Activated naive CD4-positive, alpha-beta T cell treated with anti-CD3 and anti-CD28 coated beads for 36 hours (primary cell): ENCODE measurements at regions of chr19 and their contacts with region 1.

Region 1: DNA sequence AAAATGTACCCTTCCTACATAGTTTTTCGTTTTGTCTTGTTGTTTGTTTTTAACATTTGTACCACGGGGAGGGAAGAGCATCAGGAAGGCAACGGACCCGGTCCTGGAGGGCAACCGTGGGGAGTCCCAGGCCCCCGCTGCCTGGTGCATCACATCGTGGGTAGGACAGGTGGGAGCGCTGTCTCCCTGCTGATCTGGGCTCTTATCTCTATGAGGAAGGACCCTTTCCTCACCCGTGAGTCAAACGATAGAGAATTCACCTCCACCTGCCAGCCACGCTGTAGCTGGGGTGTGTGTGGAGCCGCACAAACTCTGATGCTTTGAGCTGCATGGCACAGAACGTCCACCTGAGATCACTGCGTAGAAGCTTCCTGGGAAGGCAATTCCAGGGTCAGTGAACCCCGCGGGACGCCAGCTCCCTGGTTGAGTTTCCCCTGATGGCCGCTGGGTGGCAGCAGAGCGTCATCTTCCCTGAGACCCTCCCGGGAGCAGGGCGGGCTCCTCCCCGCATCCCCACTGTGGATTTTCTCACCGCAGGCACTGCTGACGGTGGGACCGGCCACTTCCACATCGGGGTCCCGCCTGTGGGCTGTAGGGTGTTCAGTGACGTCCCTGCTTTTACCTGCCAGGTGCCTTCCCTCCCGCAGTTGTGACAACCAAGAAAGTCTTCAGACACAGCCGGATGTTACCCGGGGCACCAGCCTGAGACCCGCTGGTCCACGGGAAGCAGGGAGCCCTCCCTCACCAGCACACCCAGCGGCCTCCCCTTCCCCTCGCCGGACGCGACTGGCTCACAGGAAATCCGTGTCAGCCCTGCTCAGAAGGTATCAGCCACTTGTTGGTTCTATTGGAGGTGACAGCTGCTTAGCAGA is 54.7 kb downstream of the ZNF787 start:
- DNase-seq: peak; percentile 68
- H3K4me3 Mint-ChIP-seq: peak overlapping the region; percentile 32
- H3K27ac Mint-ChIP-seq: no peak overlapping the region
- H3K4me1 Mint-ChIP-seq: peaks cover 12% of the 10 kb centered on the region
- H3K27me3 Mint-ChIP-seq: peaks cover 34% of the 10 kb centered on the region

Region 2: GRCh38 chr19:56080669-56081401 is 14.4 kb after region 1 on chr19:
- CTCF ChIA-PET with region 1: interaction called, 23 read pairs
- intact Hi-C with region 1: no loop called
- DNase-seq: peak; percentile 84
- H3K4me3 Mint-ChIP-seq: peak overlapping the region; percentile 41
- H3K27ac Mint-ChIP-seq: no peak overlapping the region
- H3K4me1 Mint-ChIP-seq: peaks cover 10% of the 10 kb centered on the region
- H3K27me3 Mint-ChIP-seq: peaks cover 17% of the 10 kb centered on the region

Region 3: GRCh38 chr19:56121180-56122167 is 55.1 kb after region 1 on chr19 and contains the start of gene ZNF787:
- CTCF ChIA-PET with region 1: no interaction called
- intact Hi-C with region 1: no loop called
- DNase-seq: peak; percentile 95
- H3K4me3 Mint-ChIP-seq: peak within 1 kb of the TSS; percentile 86
- H3K27ac Mint-ChIP-seq: peak within 1 kb of the TSS; percentile 94
- H3K4me1 Mint-ChIP-seq: peaks cover 52% of the 10 kb centered on the region
- H3K27me3 Mint-ChIP-seq: no peaks in the 10 kb centered on the region
- total RNA-seq, gene ZNF787: 24.2 to 26.1 TPM

Region 4: GRCh38 chr19:56170261-56170660 is 103.9 kb after region 1 on chr19:
- CTCF ChIA-PET with region 1: interaction called, 16 read pairs
- intact Hi-C with region 1: no loop called
- DNase-seq: no peak
- H3K4me3 Mint-ChIP-seq: no peak overlapping the region
- H3K27ac Mint-ChIP-seq: no peak overlapping the region
- H3K4me1 Mint-ChIP-seq: peaks cover 3% of the 10 kb centered on the region
- H3K27me3 Mint-ChIP-seq: peaks cover 3% of the 10 kb centered on the region

Region 5: DNA sequence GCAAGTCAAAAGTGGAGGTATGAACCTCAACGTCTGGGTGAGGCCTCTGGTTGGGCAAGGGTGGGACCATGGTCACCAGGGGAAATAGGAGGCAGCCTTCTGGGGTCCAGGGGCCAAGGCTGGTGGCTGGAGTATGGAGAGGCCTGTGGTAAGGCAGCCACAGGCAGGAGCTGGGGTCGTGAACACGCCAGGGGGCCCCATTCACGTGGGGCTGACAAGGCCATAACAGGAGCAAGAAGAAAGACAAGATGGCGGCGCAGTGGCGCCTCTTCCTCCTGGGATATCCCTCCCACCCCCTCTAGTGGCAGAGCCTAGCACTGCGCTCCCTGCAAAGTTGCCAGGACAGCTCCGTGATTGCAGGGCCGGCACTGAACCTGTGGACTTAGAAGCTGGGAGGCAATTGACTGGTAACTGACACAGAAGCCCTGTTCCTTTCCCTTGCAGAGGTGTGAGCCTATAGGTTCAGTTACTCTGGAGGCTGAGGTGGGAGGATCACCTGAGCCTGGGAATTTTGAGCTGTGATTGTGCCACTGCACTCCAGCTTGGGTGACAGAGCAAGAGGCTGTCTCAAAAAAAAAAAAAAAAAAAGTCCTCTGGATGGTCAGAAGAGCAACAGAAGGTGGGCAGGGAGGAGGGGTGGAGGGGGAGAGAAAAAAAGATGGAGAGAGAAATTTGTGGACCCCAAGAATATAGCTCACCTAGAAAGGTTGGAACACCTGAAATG is 186.5 kb after region 1 on chr19:
- CTCF ChIA-PET with region 1: interaction called, 8 read pairs
- intact Hi-C with region 1: loop called (anchors 5 kb)
- DNase-seq: peak; percentile 87
- H3K4me3 Mint-ChIP-seq: no peak overlapping the region
- H3K27ac Mint-ChIP-seq: no peak overlapping the region
- H3K4me1 Mint-ChIP-seq: peaks cover 3% of the 10 kb centered on the region
- H3K27me3 Mint-ChIP-seq: no peaks in the 10 kb centered on the region

Region 6: GRCh38 chr19:56321989-56322440 is 255.6 kb after region 1 on chr19:
- CTCF ChIA-PET with region 1: no interaction called
- intact Hi-C with region 1: no loop called
- DNase-seq: no peak
- H3K4me3 Mint-ChIP-seq: no peak overlapping the region
- H3K27ac Mint-ChIP-seq: no peak overlapping the region
- H3K4me1 Mint-ChIP-seq: no peaks in the 10 kb centered on the region
- H3K27me3 Mint-ChIP-seq: peaks cover 7% of the 10 kb centered on the region

Region 7: GRCh38 chr19:56333505-56333904 is 267.1 kb after region 1 on chr19:
- CTCF ChIA-PET with region 1: interaction called, 13 read pairs
- intact Hi-C with region 1: no loop called
- DNase-seq: peak; percentile 66
- H3K4me3 Mint-ChIP-seq: no peak overlapping the region
- H3K27ac Mint-ChIP-seq: no peak overlapping the region
- H3K4me1 Mint-ChIP-seq: no peaks in the 10 kb centered on the region
- H3K27me3 Mint-ChIP-seq: no peaks in the 10 kb centered on the region

Region 8: GRCh38 chr19:56350416-56351045 is 284.1 kb after region 1 on chr19:
- CTCF ChIA-PET with region 1: interaction called, 3 read pairs
- intact Hi-C with region 1: loop called (anchors 1 kb)
- DNase-seq: peak; percentile 77
- H3K4me3 Mint-ChIP-seq: no peak overlapping the region
- H3K27ac Mint-ChIP-seq: no peak overlapping the region
- H3K4me1 Mint-ChIP-seq: no peaks in the 10 kb centered on the region
- H3K27me3 Mint-ChIP-seq: no peaks in the 10 kb centered on the region